ENCODE measurements at regions of chr6 and their contacts with region 1.

Region 1: GRCh38 chr6:36340618-36341454 is 4.1 kb upstream of the BNIP5 start:
- DNase-seq: peak; percentile 83
- ATAC-seq: peak; percentile 84
- H3K4me3 Mint-ChIP-seq: peak overlapping the region; percentile 70
- H3K27ac Mint-ChIP-seq: no peak overlapping the region; the same call in 1 of the 2 replicates
- H3K4me1 Mint-ChIP-seq: peaks cover 9% of the 10 kb centered on the region
- H3K27me3 Mint-ChIP-seq: peaks cover 15% of the 10 kb centered on the region
- CTCF ChIP-seq: peak; percentile 93

Region 2: GRCh38 chr6:36263390-36264000 is 77.3 kb before region 1 on chr6:
- CTCF ChIA-PET with region 1: interaction called, 10 read pairs
- POLR2A ChIA-PET with region 1: no interaction called
- DNase-seq: no peak
- ATAC-seq: no peak
- H3K4me3 Mint-ChIP-seq: no peak overlapping the region
- H3K27ac Mint-ChIP-seq: no peak overlapping the region
- H3K4me1 Mint-ChIP-seq: peaks cover 8% of the 10 kb centered on the region
- H3K27me3 Mint-ChIP-seq: peaks cover 3% of the 10 kb centered on the region; the same call in 1 of the 2 replicates
- CTCF ChIP-seq: no peak

Region 3: GRCh38 chr6:36326356-36326995 is 14.4 kb before region 1 on chr6:
- CTCF ChIA-PET with region 1: interaction called, 47 read pairs
- POLR2A ChIA-PET with region 1: interaction called, 6 read pairs
- DNase-seq: no peak
- ATAC-seq: no peak
- H3K4me3 Mint-ChIP-seq: no peak overlapping the region
- H3K27ac Mint-ChIP-seq: no peak overlapping the region
- H3K4me1 Mint-ChIP-seq: peaks cover 21% of the 10 kb centered on the region
- H3K27me3 Mint-ChIP-seq: no peaks in the 10 kb centered on the region
- CTCF ChIP-seq: no peak

Region 4: DNA sequence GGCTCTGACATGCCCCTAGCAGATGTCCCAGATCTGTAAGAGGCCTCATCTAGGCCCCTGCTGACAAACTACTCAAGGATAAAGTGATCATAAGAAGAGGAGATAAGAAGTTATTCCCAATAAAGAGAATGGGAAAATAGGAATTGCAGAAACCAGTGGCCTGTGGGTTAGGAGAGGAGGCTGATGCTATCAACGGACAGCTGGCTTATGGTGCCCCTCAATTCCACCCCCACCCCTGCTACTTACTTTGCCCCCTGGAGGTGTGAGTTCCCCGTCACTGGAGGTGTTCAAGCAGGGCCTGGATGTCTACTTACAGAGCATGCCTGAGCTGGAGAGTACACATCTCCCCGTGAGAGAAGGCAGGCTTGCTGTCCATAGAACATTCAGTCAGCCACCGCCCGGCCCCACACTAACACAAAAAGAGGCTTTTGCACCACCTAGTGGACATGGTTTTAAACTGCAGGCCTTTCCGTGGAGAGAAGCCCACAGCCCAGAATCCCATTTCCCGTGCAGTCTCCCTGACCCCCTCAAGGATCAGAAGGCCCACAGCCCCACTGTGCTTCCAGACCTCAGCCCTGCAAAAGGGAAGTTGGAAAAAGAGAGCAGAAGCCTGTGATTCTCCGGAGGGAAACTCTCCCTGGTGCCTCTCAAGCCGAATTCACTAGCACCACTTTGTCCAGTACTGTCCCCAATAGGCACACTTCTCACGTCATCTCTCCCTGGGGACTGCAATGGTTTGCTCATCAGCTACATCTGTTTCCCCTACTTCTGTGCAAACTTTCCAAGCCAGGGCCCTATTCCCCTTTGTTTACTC is 19.6 kb after region 1 on chr6:
- CTCF ChIA-PET with region 1: interaction called, 27 read pairs
- POLR2A ChIA-PET with region 1: interaction called, 4 read pairs
- DNase-seq: peak; percentile 77
- ATAC-seq: peak; percentile 96
- H3K4me3 Mint-ChIP-seq: no peak overlapping the region
- H3K27ac Mint-ChIP-seq: no peak overlapping the region
- H3K4me1 Mint-ChIP-seq: no peaks in the 10 kb centered on the region
- H3K27me3 Mint-ChIP-seq: no peaks in the 10 kb centered on the region; the same call in 1 of the 2 replicates
- CTCF ChIP-seq: peak; percentile 67

Region 5: DNA sequence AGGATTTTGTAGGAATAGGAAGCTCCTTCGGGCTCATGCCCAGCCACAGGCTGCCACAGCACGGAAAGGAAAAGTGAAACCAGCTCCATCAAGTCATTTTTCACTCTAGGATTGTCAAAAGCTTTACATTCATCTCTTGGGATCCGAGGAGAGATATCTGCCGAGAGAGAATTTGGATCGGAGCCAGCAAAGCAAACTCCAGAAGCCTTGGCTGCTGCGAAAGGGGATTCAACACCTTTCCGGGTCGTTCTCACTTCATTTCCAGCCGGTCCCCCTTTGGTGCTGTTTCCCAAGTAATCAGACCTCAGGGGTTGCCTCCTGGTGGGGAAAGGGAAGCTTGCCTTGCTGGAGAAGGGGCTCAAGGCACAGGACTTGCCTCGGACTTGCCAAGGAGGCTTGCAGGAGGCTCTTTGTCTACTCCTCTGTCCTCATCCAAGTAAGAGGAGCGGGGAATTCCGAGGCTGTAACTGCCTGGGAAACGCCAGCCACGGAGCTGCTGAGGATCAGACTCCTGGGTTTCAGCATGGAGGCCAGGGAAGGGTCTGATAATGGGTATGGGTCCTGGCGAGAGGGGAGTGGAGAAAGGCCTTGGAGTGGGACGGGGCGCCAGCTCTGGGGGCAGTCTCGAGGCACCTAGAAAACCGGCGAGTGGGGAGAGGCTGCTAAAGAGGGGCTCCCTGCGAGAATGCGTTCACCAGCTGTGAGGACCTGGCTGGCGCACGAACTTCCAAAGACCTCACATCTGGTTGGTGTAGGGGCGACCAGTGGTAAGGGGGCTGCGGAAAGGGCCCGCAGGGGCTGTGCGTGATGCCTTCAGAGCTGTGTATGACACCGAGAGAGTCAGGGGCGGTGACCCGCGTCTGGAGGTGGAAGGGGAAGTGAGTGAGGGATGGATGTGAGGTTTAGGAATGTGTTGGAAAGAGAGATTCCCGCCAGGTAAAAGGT is 45.9 kb after region 1 on chr6:
- CTCF ChIA-PET with region 1: interaction called, 10 read pairs
- POLR2A ChIA-PET with region 1: no interaction called
- DNase-seq: peak; percentile 43
- ATAC-seq: peak; percentile 57
- H3K4me3 Mint-ChIP-seq: peak overlapping the region; percentile 81
- H3K27ac Mint-ChIP-seq: no peak overlapping the region
- H3K4me1 Mint-ChIP-seq: peaks cover 26% of the 10 kb centered on the region
- H3K27me3 Mint-ChIP-seq: peaks cover 56% of the 10 kb centered on the region
- CTCF ChIP-seq: no peak